Activated naive CD4-positive, alpha-beta T cell treated with anti-CD3 and anti-CD28 coated beads for 36 hours (primary cell): ENCODE measurements at regions of chr6 and their contacts with region 1.

Region 1: DNA sequence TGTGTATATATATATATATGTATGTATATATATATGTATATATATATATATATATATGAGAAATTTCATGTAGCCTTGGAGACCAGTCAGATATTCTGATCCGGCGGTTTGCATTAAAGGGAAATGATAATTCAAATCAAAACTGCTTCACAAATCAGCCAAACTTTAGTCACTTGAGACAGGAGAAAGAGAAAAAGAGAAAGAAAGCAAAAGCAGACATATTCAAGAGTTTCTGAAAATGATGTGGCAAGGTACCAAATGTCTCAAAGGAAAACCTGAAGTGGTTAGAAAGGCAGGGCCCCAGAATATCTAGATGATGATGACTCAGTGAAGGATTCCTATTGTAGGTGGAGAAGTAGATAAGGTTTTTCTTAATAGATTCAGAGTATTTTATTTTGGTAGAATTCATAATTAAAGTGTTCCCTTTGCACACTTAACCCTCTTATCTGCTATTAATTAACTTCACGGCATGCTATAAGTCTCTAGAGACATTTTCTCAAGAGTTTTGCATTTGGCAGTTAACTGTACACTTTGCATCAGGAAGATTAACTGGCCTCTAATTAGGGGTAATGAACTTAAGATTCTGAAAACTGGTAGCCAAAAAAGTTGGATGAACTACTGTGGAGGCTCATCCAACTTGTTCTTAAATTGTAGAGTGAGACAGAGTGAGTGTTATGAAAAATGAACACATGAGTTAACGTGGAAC is 50.1 kb upstream of the ASF1A start:
- DNase-seq: peak; percentile 50
- H3K4me3 Mint-ChIP-seq: no peak overlapping the region
- H3K27ac Mint-ChIP-seq: peak overlapping the region; percentile 2
- H3K4me1 Mint-ChIP-seq: peaks cover 23% of the 10 kb centered on the region
- H3K27me3 Mint-ChIP-seq: no peaks in the 10 kb centered on the region

Region 2: GRCh38 chr6:118187568-118188164 is 656.2 kb before region 1 on chr6:
- CTCF ChIA-PET with region 1: no interaction called
- intact Hi-C with region 1: loop called (anchors 2 kb)
- DNase-seq: peak; percentile 53
- H3K4me3 Mint-ChIP-seq: peak overlapping the region; percentile 5
- H3K27ac Mint-ChIP-seq: peak overlapping the region; percentile 82
- H3K4me1 Mint-ChIP-seq: peaks cover 32% of the 10 kb centered on the region
- H3K27me3 Mint-ChIP-seq: no peaks in the 10 kb centered on the region

Region 3: DNA sequence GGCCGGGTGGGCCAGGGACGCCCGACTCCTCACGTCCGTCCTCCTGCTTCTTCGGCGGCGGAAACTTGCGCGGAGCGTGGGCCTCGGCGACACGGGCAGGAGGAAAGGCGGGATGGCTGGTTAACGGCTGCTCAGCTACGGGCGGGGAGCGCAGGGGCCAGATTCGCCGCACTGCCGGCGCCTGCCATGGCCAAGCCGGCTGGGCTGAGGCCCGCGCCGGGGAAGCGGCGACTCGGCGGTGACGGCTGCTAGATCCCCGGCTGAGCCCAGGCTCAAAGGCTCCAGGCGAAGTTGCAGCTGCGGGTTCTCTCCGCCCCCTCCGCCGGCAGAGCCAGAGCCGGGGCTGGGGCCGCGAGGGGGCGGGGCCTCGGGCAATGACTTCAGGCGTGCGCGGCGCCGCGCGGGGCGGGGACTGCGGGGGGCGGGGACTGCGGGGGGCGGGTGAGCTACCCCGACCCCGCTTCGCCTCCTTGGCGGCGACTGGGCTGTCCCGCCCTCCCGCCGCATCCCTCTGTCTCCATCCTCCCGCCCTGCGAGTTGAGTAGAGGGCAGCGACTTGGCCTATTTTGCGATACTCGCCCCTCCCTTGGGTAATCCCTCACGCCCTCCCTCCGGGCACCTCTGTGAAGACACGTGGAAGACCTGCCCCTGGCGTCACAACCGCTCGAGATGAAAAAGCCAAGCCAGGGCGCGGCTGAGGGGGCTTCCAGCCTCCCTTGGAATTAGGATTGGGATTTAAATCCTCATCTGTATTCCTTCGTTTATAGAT is 192.4 kb before region 1 on chr6 and contains the start of gene CEP85L:
- CTCF ChIA-PET with region 1: no interaction called
- intact Hi-C with region 1: loop called (anchors 1 kb)
- DNase-seq: peak; percentile 90
- H3K4me3 Mint-ChIP-seq: peak within 1 kb of the TSS; percentile 86
- H3K27ac Mint-ChIP-seq: peak within 1 kb of the TSS; percentile 89
- H3K4me1 Mint-ChIP-seq: peaks cover 49% of the 10 kb centered on the region
- H3K27me3 Mint-ChIP-seq: no peaks in the 10 kb centered on the region
- total RNA-seq, gene CEP85L: 31.4 to 31.9 TPM

Region 4: DNA sequence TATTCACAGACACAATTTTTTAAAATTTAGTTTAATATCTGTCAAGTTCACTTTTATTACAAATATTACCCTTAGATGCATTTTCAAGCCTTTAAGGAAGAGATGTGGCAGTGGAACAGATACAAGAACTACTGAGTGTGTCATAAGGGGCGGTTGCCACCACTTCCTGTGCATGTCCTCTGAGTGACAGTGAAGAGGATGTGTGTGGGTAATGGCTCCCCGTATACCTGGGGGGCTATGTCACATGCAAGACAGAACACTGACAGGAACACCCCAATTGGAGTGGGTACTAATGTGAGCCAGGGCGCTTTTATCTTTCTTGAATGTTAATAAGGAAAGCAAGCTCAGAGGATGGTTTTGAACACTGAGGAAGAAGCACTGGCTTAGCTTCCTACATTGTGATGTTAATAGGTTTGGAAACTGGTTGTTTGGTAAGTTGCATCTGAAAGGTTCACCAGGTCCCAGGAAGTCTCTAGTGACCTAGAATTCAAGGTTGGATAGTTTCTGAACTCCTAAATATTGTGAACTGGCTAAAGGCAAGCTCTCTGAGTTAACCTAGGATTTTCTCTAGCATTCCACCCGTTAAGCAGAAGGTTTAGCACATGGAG is 33.3 kb before region 1 on chr6:
- CTCF ChIA-PET with region 1: no interaction called
- intact Hi-C with region 1: loop called (anchors 1 kb)
- DNase-seq: peak; percentile 79
- H3K4me3 Mint-ChIP-seq: no peak overlapping the region
- H3K27ac Mint-ChIP-seq: peak overlapping the region; percentile 75
- H3K4me1 Mint-ChIP-seq: peaks cover 47% of the 10 kb centered on the region
- H3K27me3 Mint-ChIP-seq: no peaks in the 10 kb centered on the region

Region 5: GRCh38 chr6:118934461-118935330 is 90.9 kb after region 1 on chr6 and contains the start of gene MCM9:
- CTCF ChIA-PET with region 1: no interaction called
- intact Hi-C with region 1: loop called (anchors 1 kb)
- DNase-seq: peak; percentile 89
- H3K4me3 Mint-ChIP-seq: peak within 1 kb of the TSS; percentile 87
- H3K27ac Mint-ChIP-seq: peak within 1 kb of the TSS; percentile 90
- H3K4me1 Mint-ChIP-seq: peaks cover 29% of the 10 kb centered on the region
- H3K27me3 Mint-ChIP-seq: no peaks in the 10 kb centered on the region
- total RNA-seq, gene MCM9: 16.3 to 16.4 TPM

Region 6: DNA sequence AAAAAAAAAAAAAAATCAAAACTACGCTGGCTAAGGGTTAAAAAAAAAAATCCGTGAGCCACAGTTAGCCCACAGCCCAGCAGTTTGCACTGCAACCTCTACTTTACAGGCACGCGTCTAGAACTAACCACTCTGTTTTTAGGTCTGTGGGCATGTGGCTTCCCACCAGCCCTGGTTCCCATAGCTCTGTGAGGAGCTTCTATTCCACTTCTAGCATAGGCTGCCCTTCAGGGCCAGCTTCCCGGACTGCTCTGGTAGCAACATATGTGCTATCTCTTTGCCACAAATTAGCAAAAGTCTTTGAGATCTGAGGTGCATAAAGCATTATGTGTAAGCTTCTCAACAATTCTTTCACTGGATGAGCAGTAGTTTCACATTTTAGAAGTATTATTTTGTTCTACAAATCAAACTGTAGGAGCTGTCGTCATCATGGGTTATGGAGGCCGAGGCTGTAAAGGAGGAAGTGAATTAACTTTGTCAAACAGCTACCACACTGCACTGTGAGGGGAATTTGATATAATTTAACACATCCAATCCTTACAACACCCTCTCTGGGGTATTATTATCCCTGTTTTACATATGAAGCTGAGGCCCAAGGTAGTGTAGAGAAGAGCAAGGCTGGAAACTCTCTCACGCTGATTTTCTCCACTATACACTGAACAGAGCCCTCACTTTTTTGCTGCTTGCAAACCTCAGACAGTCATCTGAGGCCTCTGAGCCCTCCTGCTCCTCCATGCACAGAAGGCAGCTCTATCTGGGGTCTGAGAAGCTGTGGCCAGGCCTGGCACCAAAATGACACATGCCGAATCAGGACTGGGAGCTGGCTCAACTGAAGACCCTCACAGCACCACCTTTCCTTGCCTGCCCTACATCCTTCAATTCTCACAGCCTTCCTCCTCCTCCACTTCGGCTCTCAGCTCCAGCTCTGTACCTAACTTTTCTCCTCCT is 470.4 kb after region 1 on chr6:
- CTCF ChIA-PET with region 1: no interaction called
- intact Hi-C with region 1: loop called (anchors 1 kb)
- DNase-seq: peak; percentile 65
- H3K4me3 Mint-ChIP-seq: peak overlapping the region; percentile 41
- H3K27ac Mint-ChIP-seq: peak overlapping the region; percentile 92
- H3K4me1 Mint-ChIP-seq: peaks cover 58% of the 10 kb centered on the region
- H3K27me3 Mint-ChIP-seq: no peaks in the 10 kb centered on the region

Region 7: DNA sequence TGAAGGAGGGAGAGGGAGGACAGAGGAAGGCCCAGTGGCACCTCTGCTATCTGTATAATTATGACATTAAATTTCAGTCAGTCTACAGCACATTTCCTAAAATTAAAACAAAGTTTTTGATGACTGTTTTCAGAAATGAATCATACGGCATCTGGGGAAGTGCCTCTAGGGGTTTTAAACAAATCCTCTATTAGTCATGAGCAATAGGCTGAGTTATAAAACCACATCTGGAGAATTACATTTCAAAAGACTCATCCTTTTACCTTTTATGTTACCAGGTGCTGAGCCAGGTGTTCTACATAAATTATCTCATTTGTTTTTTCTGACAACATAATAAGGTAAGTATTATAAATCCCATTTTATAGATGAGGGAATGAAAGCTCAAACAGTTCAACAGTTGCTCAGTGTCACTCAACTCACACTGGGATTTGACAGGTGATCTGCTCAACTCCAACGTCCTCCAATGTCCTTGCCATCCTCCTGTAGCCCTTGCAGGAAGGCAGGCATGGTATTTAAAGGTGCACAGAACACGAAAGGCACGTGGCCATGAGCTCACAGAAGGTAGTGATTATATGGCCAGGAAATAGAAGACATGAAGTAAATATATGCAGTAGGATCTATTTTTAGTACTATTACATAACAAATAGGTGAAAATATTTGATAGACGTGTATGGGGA is 689.9 kb after region 1 on chr6:
- CTCF ChIA-PET with region 1: no interaction called
- intact Hi-C with region 1: loop called (anchors 5 kb)
- DNase-seq: peak; percentile 16
- H3K4me3 Mint-ChIP-seq: no peak overlapping the region
- H3K27ac Mint-ChIP-seq: no peak overlapping the region
- H3K4me1 Mint-ChIP-seq: peaks cover 9% of the 10 kb centered on the region
- H3K27me3 Mint-ChIP-seq: peaks cover 6% of the 10 kb centered on the region